ENCODE measurements at regions of chr2 and their contacts with region 1.

Region 1: DNA sequence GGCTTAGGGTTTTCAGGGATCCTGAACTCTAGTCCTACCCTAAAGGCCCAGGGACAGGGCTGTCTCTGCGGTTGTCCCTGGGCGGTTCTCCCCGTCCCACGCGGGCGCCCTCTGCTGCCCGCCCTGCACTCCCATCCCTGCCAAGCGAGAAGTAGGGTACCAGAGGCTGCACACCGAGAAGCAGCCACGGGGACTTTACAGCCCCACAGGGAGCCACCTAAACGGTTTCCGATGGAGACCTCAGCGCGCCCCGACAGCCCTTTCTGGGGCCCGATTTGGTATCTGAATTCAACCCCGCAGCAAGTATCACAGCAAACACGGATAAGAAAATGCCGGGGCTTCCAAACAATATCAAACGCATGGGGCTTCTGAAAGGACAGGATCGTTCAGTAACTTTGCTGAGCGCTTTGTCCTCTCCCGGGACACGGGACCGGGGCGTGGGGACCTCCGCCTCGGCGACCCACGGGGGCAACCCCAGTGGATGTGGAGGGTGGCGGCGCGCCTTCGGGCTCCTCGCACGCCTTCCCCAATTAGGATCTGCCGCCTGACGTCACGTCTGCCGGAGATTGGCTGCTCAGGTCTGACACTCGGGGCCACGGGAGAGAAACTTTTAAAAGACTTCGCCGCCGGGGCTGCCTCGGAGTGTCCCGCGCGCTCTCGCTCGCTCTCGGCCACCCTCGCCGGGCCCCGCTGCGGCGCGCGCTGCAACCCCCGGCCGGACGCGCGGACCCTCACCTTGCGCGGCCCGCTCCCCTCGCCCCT is at the start of gene LTBP1:
- DNase-seq: peak; percentile 70 to 85 (median 77)
- ATAC-seq: peak; percentile 88
- H3K4me3 ChIP-seq: peak within 1 kb of the TSS; percentile 64
- H3K27ac ChIP-seq: peak within 1 kb of the TSS; percentile 70
- H3K4me1 ChIP-seq: peaks cover 27 to 29% of the 10 kb centered on the region in 2 experiments; a peak in 4 of 5 replicates
- H3K27me3 ChIP-seq: no peaks in the 10 kb centered on the region
- CTCF ChIP-seq: peak; percentile 79 to 92 (median 84)
- EP300 ChIP-seq: no peak
- POLR2A ChIP-seq: no peak
- RAD21 ChIP-seq: peak; percentile 74 to 82
- polyA plus RNA-seq, gene LTBP1: 4.3 to 5.2 TPM

Region 2: GRCh38 chr2:32832821-32833220 is 113.7 kb before region 1 on chr2:
- CTCF ChIA-PET with region 1: interaction called, 3 read pairs
- POLR2A ChIA-PET with region 1: no interaction called
- in situ Hi-C with region 1: no loop called
- intact Hi-C with region 1: loop called (anchors 5 kb)
- DNase-seq: no peak
- ATAC-seq: no peak
- H3K4me3 ChIP-seq: no peak overlapping the region
- H3K27ac ChIP-seq: no peak overlapping the region
- H3K4me1 ChIP-seq: peaks cover 3 to 22% of the 10 kb centered on the region in 2 experiments; a peak in 4 of 5 replicates
- H3K27me3 ChIP-seq: no peaks in the 10 kb centered on the region
- CTCF ChIP-seq: no peak
- EP300 ChIP-seq: no peak
- POLR2A ChIP-seq: no peak
- RAD21 ChIP-seq: no peak

Region 3: DNA sequence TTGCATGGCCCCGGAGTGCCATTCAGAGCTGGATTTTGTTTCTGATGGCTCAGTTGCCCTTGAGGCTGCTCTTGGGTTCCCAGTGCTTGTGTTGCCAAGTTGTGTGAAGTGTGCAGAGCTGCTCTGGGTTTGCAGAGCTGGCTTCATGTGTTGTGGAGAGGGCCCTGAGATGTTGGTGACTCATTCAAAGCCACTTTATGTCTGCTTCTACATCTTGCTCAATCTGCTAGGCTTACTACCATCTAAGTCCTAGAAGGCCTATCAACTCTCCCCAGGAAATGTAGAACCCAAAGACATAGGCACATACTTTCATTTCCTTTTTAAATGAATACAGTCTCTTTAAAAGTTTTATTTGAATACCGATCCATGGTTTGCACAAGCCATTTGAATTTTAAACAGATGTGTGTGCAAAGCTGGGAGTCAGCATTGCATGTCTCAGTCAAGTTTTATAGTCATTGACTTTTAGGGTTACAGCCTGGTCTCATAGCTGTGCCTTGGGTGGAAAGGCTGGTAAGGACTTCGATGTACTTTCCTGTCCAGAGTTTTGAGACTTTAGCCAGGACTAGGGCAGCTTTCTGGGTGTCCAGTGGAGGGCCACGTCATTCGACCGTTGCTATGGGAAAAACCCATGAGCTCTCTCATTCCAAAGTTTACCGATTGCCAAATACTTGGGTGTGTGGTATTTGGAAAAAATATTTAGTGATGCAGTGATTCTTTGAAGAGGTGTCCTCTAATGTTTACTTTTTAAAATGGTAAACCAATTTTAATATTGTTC is 105.3 kb after region 1 on chr2:
- CTCF ChIA-PET with region 1: no interaction called
- POLR2A ChIA-PET with region 1: no interaction called
- in situ Hi-C with region 1: no loop called
- intact Hi-C with region 1: no loop called
- DNase-seq: no peak
- ATAC-seq: peak; percentile 52; the same call in 2 of the 3 replicates
- H3K4me3 ChIP-seq: no peak overlapping the region
- H3K27ac ChIP-seq: no peak overlapping the region
- H3K4me1 ChIP-seq: peaks cover 0 to 2% of the 10 kb centered on the region in 2 experiments; a peak in 1 of 5 replicates
- H3K27me3 ChIP-seq: no peaks in the 10 kb centered on the region
- CTCF ChIP-seq: no peak
- EP300 ChIP-seq: no peak
- POLR2A ChIP-seq: no peak
- RAD21 ChIP-seq: no peak

Region 4: DNA sequence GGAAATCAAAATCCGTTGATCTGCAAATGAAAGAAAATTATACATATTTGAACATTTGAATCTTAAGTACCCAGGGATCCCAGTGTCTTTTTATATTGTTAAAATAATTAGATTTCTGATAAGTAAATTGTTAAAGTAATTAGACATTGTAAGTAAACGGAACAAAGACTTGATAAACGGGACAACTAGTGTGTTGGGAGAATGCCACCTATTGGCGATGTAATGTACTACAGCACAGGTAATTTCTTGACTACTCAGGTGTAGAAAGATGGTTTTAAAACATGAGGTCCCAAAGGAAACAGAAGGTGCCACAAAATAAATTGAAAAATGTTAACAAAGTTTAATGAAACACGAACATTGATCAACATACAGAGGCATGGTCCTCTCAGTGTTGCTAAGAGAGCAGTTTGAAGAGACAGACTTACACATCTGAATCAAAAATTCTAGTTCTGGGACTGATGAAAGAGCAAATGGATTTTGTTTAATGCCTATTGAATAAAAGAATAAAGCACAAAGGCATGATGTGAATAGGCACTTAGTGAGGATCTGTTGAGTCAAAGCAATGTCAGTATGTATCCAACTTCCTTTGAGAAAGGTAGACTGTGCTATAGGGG is 426.6 kb after region 1 on chr2:
- CTCF ChIA-PET with region 1: no interaction called
- POLR2A ChIA-PET with region 1: no interaction called
- in situ Hi-C with region 1: loop called (anchors 10 kb)
- intact Hi-C with region 1: loop called (anchors 5 kb)
- DNase-seq: peak; percentile 43 to 63 (median 58)
- ATAC-seq: peak; percentile 62
- H3K4me3 ChIP-seq: no peak overlapping the region
- H3K27ac ChIP-seq: no peak overlapping the region
- H3K4me1 ChIP-seq: no peaks in the 10 kb centered on the region; a peak in 1 of 5 replicates
- H3K27me3 ChIP-seq: no peaks in the 10 kb centered on the region
- CTCF ChIP-seq: peak; percentile 54 to 78 (median 73); a peak in 5 of 6 replicates
- EP300 ChIP-seq: no peak
- POLR2A ChIP-seq: no peak
- RAD21 ChIP-seq: peak; percentile 81 to 83

Region 5: GRCh38 chr2:33599175-33599942 is 652.9 kb after region 1 on chr2 and contains the start of gene FAM98A:
- CTCF ChIA-PET with region 1: no interaction called
- POLR2A ChIA-PET with region 1: no interaction called
- in situ Hi-C with region 1: loop called (anchors 25 kb)
- intact Hi-C with region 1: no loop called
- DNase-seq: peak; percentile 95 to 99 (median 97)
- ATAC-seq: peak; percentile 94
- H3K4me3 ChIP-seq: peak within 1 kb of the TSS; percentile 96
- H3K27ac ChIP-seq: peak within 1 kb of the TSS; percentile 84
- H3K4me1 ChIP-seq: peaks cover 0 to 11% of the 10 kb centered on the region in 2 experiments; a peak in 2 of 5 replicates
- H3K27me3 ChIP-seq: no peaks in the 10 kb centered on the region
- CTCF ChIP-seq: 0 out of 6 replicates have a peak, but pooled peaks of 1 of the 3 experiments have one; percentile 24
- EP300 ChIP-seq: no peak
- POLR2A ChIP-seq: peak; percentile 75
- RAD21 ChIP-seq: no peak
- polyA plus RNA-seq, gene FAM98A: 16.5 to 23.4 TPM